ENCODE measurements at regions of chr20 and their contacts with region 1.

Region 1: GRCh38 chr20:266596-267562 is 9.4 kb downstream of the DEFB132 start:
- DNase-seq: peak; percentile 89 to 96
- ATAC-seq: peak; percentile 95
- H3K4me3 ChIP-seq: peak overlapping the region; percentile 5 to 28
- H3K27ac ChIP-seq: no peak overlapping the region
- H3K4me1 ChIP-seq: no peaks in the 10 kb centered on the region
- H3K27me3 ChIP-seq: no peaks in the 10 kb centered on the region

Region 2: GRCh38 chr20:208942-209566 is 57.8 kb before region 1 on chr20:
- intact Hi-C with region 1: loop called in 1 of 2 experiments (anchors 2 kb)
- DNase-seq: no peak
- ATAC-seq: no peak
- H3K4me3 ChIP-seq: no peak overlapping the region
- H3K27ac ChIP-seq: no peak overlapping the region
- H3K4me1 ChIP-seq: no peaks in the 10 kb centered on the region
- H3K27me3 ChIP-seq: no peaks in the 10 kb centered on the region

Region 3: DNA sequence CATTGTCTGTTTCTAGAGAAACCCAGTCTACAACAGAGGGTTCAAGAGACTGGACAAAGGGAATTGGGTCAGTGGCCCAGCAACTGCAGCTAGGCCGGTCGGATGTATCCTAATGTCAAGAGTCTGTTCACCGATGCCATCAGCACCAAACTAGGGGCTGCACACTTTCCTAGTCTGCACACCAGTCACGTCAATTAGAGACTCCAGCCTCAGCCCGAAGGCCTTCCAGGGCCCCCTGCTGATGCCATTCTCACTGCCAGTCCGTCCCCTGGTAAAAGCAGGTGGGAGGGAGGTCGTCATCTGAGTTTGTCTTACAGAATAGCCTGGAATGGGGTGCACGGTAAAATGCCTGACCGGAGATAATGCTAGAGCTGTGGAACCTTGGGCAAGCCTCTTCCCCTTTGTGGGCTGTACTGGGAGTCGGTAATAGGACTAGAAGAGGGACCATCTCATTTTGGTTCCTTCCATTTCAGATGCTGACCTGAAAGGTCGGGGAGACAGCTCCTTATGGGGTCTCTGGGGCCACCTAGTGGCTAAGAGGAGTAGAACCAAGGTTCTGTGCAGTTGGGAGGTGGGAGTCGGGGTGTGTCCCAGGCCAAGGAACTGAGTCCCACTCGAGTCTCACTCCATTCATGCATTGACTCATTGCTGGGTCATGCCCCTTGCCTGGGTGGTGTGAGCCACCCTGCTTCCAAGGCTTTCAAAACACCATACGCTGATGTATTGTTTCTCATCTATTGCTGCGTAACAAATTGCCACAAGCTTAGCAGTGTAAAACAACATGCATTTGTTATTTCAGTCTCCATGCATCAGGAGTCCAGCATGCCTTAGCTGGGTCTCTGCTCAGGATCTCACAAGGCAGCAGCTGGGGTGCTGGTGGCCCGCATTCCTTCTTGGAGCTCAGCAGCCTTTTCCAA is 63.6 kb after region 1 on chr20:
- intact Hi-C with region 1: loop called in 1 of 2 experiments (anchors 10 kb)
- DNase-seq: peak; percentile 60 to 70
- ATAC-seq: peak; percentile 36
- H3K4me3 ChIP-seq: no peak overlapping the region
- H3K27ac ChIP-seq: no peak overlapping the region
- H3K4me1 ChIP-seq: no peaks in the 10 kb centered on the region
- H3K27me3 ChIP-seq: no peaks in the 10 kb centered on the region